A673 (cell line): ENCODE measurements at regions of chr1 and their contacts with region 1.

Region 1: DNA sequence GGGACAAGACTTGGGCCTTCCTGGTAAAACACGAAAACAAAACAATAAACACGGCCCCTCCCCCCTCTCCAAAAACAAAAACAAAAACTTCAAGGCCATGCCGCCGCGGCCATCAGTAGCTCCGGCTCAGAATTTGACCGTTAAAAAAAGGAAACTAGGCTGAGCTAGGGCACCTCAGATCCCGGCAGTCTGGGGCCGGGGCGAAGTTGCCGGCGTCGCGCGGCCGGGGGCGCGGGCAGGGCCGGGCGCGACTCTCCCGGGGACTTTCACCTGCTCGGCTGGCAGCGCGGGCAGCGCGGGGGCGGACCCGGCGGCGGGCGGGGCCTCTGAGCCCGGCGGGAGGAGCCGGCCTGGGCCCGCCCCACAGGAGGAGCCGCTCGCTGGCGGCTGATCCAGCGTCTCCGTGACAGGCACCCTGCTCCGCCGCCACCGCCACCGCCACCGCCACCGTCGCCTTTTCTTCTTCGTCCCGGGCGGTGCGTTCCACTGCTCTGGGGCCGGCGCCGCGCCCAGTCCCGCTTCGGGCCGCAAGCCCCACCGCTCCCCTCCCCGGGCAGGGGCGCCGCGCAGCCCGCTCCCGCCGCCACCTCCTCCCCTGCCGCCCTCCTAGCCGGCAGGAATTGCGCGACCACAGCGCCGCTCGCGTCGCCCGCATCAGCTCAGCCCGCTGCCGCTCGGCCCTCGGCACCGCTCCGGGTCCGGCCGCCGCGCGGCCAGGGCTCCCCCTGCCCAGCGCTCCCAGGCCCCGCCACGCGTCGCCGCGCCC is at the start of gene NOS1AP:
- DNase-seq: peak; percentile 89
- H3K4me3 ChIP-seq: peak within 1 kb of the TSS; percentile 80
- H3K27ac ChIP-seq: peak within 1 kb of the TSS; percentile 77
- H3K4me1 ChIP-seq: peaks cover 34% of the 10 kb centered on the region
- H3K27me3 ChIP-seq: no peaks in the 10 kb centered on the region
- CTCF ChIP-seq: no peak
- total RNA-seq, gene NOS1AP: 24.7 and 28.0 TPM in 2 replicates

Region 2: DNA sequence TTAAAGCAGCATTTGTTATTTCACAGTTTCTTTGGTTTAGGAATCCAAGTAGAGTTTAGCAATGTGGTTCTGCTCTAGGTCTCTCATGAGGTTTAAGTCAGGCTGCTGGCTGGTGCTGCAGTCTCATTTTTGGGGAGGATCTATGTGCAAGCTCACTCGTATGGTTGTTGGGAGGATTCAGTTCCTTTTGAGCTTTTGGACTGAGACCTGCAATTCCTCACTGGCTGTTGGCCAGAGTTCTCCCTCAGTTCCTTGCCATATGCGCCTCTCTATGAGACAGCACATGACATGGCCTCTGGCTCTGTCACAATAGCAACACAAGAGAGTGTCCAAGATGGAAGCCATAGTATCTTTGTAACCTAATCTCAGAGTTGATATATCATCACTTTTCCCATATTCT is 136.8 kb before region 1 on chr1:
- CTCF ChIA-PET with region 1: no interaction called
- POLR2A ChIA-PET with region 1: interaction called, 23 read pairs
- intact Hi-C with region 1: no loop called
- DNase-seq: no peak
- H3K4me3 ChIP-seq: no peak overlapping the region
- H3K27ac ChIP-seq: no peak overlapping the region
- H3K4me1 ChIP-seq: no peaks in the 10 kb centered on the region
- H3K27me3 ChIP-seq: no peaks in the 10 kb centered on the region
- CTCF ChIP-seq: no peak

Region 3: DNA sequence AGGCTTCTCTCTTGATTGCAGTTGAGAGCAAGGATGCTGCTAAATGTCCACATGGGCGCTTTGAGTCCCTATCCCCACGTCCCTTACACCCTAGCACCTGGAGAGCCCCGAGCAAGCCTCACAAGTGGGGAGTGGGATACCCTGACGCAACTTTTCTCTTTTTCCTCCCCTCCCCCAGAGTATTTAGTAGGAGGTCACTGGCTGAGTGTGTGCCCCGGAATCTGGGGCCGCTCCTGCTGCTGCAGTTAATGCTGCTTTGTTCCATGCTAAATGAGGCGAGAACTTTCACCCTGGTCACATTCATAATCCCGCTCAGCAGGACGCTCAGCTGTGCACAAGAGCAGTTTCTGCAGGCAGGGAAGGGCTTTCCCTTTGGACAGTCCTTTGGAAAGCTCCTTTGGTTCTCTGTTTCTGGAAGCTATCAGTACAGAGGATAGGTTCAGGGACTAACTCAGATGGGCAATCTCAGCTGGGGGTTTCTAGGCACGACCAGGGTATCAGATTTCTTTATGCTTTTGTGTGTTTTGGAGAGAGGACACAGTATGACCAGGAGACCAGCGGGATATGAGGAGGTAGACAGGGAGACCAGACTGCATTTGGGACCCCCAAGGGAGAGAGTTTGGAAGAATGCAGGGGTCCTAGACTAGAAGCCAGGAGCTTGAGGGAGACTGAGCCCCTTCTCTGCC is 75.9 kb after region 1 on chr1:
- CTCF ChIA-PET with region 1: no interaction called
- POLR2A ChIA-PET with region 1: interaction called, 5 read pairs
- intact Hi-C with region 1: loop called (anchors 5 kb)
- DNase-seq: peak; percentile 86
- H3K4me3 ChIP-seq: peak overlapping the region; percentile 17
- H3K27ac ChIP-seq: peak overlapping the region; percentile 95
- H3K4me1 ChIP-seq: peaks cover 68% of the 10 kb centered on the region
- H3K27me3 ChIP-seq: no peaks in the 10 kb centered on the region
- CTCF ChIP-seq: no peak

Region 4: GRCh38 chr1:162159515-162159914 is 90.0 kb after region 1 on chr1:
- CTCF ChIA-PET with region 1: no interaction called
- POLR2A ChIA-PET with region 1: no interaction called
- intact Hi-C with region 1: no loop called
- DNase-seq: peak; percentile 41
- H3K4me3 ChIP-seq: no peak overlapping the region
- H3K27ac ChIP-seq: peak overlapping the region; percentile 14
- H3K4me1 ChIP-seq: peaks cover 39% of the 10 kb centered on the region
- H3K27me3 ChIP-seq: no peaks in the 10 kb centered on the region
- CTCF ChIP-seq: no peak